ENCODE measurements at regions of chr18 and their contacts with region 1.

Region 1: DNA sequence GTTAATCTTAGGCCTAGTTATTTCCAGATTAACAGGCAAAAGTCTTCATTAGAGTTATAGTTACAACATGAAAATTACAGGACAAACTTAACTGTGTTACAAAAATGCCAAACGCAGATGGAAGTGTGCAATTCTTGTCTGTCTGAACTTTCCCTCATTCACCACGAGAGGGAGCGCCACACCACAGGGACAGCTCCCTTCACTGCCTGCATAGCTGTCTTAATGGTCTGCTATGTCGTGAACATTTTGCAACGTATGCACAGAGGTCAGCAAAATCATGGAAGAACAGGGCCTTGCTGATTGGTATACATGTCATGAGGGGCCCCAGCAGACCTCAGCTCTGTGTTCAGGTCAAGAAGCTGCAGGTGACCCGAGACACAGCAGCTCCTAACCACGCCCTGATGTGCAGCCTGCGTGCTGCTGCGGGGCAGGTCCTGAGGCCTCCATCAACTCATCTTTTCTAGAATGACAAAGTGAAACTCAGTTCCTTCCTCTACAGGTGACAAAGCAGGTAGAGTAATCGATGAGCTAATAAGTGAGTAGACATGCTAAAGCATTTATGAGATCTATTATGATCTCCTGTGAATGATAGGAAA is 78.8 kb upstream of the ATP8B1 start:
- DNase-seq: peak; percentile 59
- ATAC-seq: peak; percentile 82
- H3K4me3 Mint-ChIP-seq: no peak overlapping the region
- H3K27ac Mint-ChIP-seq: no peak overlapping the region
- H3K4me1 Mint-ChIP-seq: no peaks in the 10 kb centered on the region
- H3K27me3 Mint-ChIP-seq: no peaks in the 10 kb centered on the region

Region 2: GRCh38 chr18:58180738-58181353 is 298.9 kb after region 1 on chr18:
- CTCF ChIA-PET with region 1: interaction called, 11 read pairs
- DNase-seq: peak; percentile 60
- ATAC-seq: no peak
- H3K4me3 Mint-ChIP-seq: no peak overlapping the region
- H3K27ac Mint-ChIP-seq: no peak overlapping the region
- H3K4me1 Mint-ChIP-seq: no peaks in the 10 kb centered on the region
- H3K27me3 Mint-ChIP-seq: peaks cover 6% of the 10 kb centered on the region